ENCODE measurements at regions of chr6 and their contacts with region 1.

Region 1: GRCh38 chr6:24547243-24547642 is 52.5 kb downstream of the ALDH5A1 start:
- DNase-seq: peak; percentile 11 to 70 (median 36)
- ATAC-seq: peak; percentile 93
- H3K4me3 ChIP-seq: no peak overlapping the region
- H3K4me3 Mint-ChIP-seq: no peak overlapping the region
- H3K27ac ChIP-seq: no peak overlapping the region
- H3K27ac Mint-ChIP-seq: no peak overlapping the region
- H3K4me1 ChIP-seq: no peaks in the 10 kb centered on the region
- H3K4me1 Mint-ChIP-seq: peaks cover 10% of the 10 kb centered on the region
- H3K27me3 ChIP-seq: no peaks in the 10 kb centered on the region
- H3K27me3 Mint-ChIP-seq: peaks cover 8% of the 10 kb centered on the region
- CTCF ChIP-seq: no peak

Region 2: GRCh38 chr6:23601811-23602340 is 945.4 kb before region 1 on chr6:
- CTCF ChIA-PET with region 1: no interaction called
- POLR2A ChIA-PET with region 1: no interaction called
- intact Hi-C with region 1: no loop called
- DNase-seq: no peak
- ATAC-seq: no peak
- H3K4me3 ChIP-seq: no peak overlapping the region
- H3K4me3 Mint-ChIP-seq: no peak overlapping the region
- H3K27ac ChIP-seq: no peak overlapping the region
- H3K27ac Mint-ChIP-seq: no peak overlapping the region
- H3K4me1 ChIP-seq: no peaks in the 10 kb centered on the region
- H3K4me1 Mint-ChIP-seq: no peaks in the 10 kb centered on the region
- H3K27me3 ChIP-seq: no peaks in the 10 kb centered on the region
- H3K27me3 Mint-ChIP-seq: no peaks in the 10 kb centered on the region
- CTCF ChIP-seq: no peak

Region 3: GRCh38 chr6:24689964-24690363 is 142.7 kb after region 1 on chr6:
- CTCF ChIA-PET with region 1: no interaction called
- POLR2A ChIA-PET with region 1: no interaction called
- intact Hi-C with region 1: loop called in 1 of 2 experiments (anchors 1 kb)
- DNase-seq: no peak
- ATAC-seq: no peak
- H3K4me3 ChIP-seq: no peak overlapping the region
- H3K4me3 Mint-ChIP-seq: no peak overlapping the region
- H3K27ac ChIP-seq: no peak overlapping the region
- H3K27ac Mint-ChIP-seq: no peak overlapping the region
- H3K4me1 ChIP-seq: peaks cover 10% of the 10 kb centered on the region
- H3K4me1 Mint-ChIP-seq: peaks cover 11% of the 10 kb centered on the region
- H3K27me3 ChIP-seq: no peaks in the 10 kb centered on the region
- H3K27me3 Mint-ChIP-seq: no peaks in the 10 kb centered on the region
- CTCF ChIP-seq: no peak

Measured in CD8-positive, alpha-beta T cell (primary cell).